ENCODE measurements at regions of chr3 and their contacts with region 1.

Region 1: GRCh38 chr3:184800349-184800930 is 11.5 kb upstream of the VPS8 start:
- DNase-seq: no peak
- H3K4me3 Mint-ChIP-seq: no peak overlapping the region
- H3K27ac Mint-ChIP-seq: no peak overlapping the region
- H3K4me1 Mint-ChIP-seq: peaks cover 4% of the 10 kb centered on the region
- H3K27me3 Mint-ChIP-seq: peaks cover 42% of the 10 kb centered on the region

Region 2: GRCh38 chr3:184786280-184786941 is 14.0 kb before region 1 on chr3:
- CTCF ChIA-PET with region 1: interaction called, 32 read pairs
- DNase-seq: peak; percentile 54
- H3K4me3 Mint-ChIP-seq: no peak overlapping the region
- H3K27ac Mint-ChIP-seq: no peak overlapping the region
- H3K4me1 Mint-ChIP-seq: peaks cover 29% of the 10 kb centered on the region
- H3K27me3 Mint-ChIP-seq: peaks cover 17% of the 10 kb centered on the region

Region 3: DNA sequence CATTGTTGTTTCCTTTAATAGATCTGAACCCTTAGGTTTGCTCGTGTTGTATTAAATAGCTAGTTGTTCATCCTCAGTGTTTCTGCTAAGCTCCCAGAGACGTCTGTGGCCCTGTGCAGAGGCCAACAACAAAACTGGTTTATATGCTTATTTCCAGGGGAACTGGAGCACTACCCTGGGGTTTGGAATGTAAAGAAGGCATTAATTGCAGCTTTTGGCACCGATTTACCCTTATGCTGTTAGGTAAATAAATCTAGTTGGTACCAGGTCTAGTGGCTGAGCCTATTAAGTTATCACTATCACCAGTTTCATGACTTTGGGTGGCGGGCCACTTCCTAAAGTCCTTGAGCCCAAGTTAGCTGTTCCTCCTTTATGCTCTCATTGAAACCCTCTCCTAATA is 23.6 kb after region 1 on chr3:
- CTCF ChIA-PET with region 1: interaction called, 10 read pairs
- DNase-seq: no peak
- H3K4me3 Mint-ChIP-seq: no peak overlapping the region
- H3K27ac Mint-ChIP-seq: no peak overlapping the region
- H3K4me1 Mint-ChIP-seq: no peaks in the 10 kb centered on the region
- H3K27me3 Mint-ChIP-seq: no peaks in the 10 kb centered on the region

Region 4: DNA sequence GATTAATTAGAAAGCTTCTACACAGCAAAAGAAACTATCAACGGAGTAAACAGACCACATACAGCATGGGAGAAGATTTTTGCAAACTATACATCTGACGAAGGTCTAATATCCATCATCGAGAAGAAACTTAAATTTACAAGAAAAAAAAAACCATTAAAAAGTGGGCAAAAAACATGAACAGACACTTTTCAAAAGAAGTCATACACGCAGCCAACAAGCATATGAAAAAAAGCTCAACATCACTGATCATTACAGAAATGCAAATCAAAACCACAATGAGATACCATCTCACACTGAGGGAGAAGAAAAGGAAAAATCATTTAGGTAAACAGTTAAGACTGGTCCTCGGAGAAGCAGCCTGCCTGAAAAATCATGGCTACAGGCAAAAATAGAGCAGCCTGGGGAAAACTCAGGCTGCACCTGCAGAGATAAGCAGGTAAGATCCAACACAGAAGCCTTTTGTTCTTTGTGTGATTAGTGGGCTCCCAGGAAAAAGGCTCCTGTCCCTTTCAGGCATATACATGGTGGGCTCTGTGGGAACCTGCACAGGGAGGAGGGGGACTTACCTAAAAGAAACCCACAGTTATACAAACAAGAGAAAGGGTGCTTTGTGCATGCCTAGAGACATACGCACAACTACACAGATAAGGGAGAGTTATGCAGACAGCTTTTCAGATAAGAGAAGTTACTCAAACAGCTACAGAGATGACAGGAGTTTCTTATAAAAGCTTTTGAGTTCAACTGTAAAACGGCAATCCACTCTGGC is 303.1 kb after region 1 on chr3:
- CTCF ChIA-PET with region 1: no interaction called
- DNase-seq: no peak
- H3K4me3 Mint-ChIP-seq: no peak overlapping the region
- H3K27ac Mint-ChIP-seq: no peak overlapping the region
- H3K4me1 Mint-ChIP-seq: no peaks in the 10 kb centered on the region
- H3K27me3 Mint-ChIP-seq: peaks cover 15% of the 10 kb centered on the region

Measured in activated naive CD4-positive, alpha-beta T cell treated with anti-CD3 and anti-CD28 coated beads, Interleukin-2, amount 10 ng/mL, durations not matched to agents 7 days and 5 days (primary cell).